ENCODE measurements at regions of chr1 and their contacts with region 1.

Region 1: DNA sequence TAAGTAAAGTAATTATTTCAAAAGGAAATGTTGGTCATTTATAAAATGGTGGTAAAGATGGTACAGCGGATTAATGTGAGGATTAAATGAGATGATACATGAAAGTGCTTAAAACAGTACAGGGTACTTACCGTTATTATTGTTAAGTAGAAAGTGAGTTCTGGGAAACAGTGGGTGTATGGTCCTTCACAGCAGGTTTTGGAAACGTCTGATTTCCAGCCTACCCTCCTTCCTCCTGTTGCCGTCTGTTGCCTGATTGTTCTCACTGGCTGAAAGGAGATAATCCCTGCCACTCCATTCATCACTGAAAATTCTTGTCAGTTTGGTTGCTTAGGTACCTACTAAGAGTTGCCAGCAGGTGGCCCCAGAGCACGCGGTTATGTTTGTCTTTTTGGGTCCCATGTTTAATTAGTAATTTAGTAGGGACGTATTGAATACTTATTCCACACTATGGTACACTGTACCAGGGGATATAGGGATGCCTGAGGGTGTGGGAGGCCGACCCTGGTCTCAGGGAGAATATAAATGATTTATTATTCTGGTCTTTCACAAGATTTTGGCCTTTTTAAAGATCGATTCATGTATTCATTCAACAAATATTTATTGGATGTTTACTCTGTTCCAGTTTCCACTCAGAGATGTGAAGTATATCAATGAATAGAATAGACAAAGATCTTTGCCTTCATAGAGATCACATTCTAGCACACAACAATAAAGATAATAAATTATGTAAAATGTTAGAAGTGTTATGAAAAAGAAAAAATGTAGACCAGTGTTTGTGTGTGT is 30.8 kb upstream of the RPTN start:
- DNase-seq: peak; percentile 67
- ATAC-seq: peak; percentile 72
- H3K4me3 ChIP-seq: peak overlapping the region; percentile 63 to 76
- H3K27ac ChIP-seq: peak overlapping the region; percentile 80
- H3K4me1 ChIP-seq: peaks cover 3% of the 10 kb centered on the region; the same call in 1 of the 2 replicates
- H3K27me3 ChIP-seq: no peaks in the 10 kb centered on the region
- CTCF ChIP-seq: peak; percentile 89

Region 2: GRCh38 chr1:152047730-152048402 is 142.0 kb before region 1 on chr1:
- CTCF ChIA-PET with region 1: interaction called, 14 read pairs
- POLR2A ChIA-PET with region 1: no interaction called
- in situ Hi-C with region 1: no loop called
- intact Hi-C with region 1: loop called (anchors 1 kb)
- DNase-seq: peak; percentile 96
- ATAC-seq: peak; percentile 97
- H3K4me3 ChIP-seq: peak overlapping the region; percentile 34 to 59
- H3K27ac ChIP-seq: peak overlapping the region; percentile 99
- H3K4me1 ChIP-seq: peaks cover 23% of the 10 kb centered on the region
- H3K27me3 ChIP-seq: no peaks in the 10 kb centered on the region
- CTCF ChIP-seq: peak; percentile 75

Region 3: GRCh38 chr1:152347116-152347728 is 157.4 kb after region 1 on chr1:
- CTCF ChIA-PET with region 1: interaction called, 3 read pairs
- POLR2A ChIA-PET with region 1: no interaction called
- in situ Hi-C with region 1: no loop called
- intact Hi-C with region 1: loop called (anchors 2 kb)
- DNase-seq: peak; percentile 68
- ATAC-seq: peak; percentile 87
- H3K4me3 ChIP-seq: no peak overlapping the region
- H3K27ac ChIP-seq: no peak overlapping the region
- H3K4me1 ChIP-seq: no peaks in the 10 kb centered on the region
- H3K27me3 ChIP-seq: 0 out of 2 replicates have a peak, but pooled peaks cover 2% of the 10 kb centered on the region
- CTCF ChIP-seq: peak; percentile 86; the same call in 1 of the 2 replicates

Region 4: DNA sequence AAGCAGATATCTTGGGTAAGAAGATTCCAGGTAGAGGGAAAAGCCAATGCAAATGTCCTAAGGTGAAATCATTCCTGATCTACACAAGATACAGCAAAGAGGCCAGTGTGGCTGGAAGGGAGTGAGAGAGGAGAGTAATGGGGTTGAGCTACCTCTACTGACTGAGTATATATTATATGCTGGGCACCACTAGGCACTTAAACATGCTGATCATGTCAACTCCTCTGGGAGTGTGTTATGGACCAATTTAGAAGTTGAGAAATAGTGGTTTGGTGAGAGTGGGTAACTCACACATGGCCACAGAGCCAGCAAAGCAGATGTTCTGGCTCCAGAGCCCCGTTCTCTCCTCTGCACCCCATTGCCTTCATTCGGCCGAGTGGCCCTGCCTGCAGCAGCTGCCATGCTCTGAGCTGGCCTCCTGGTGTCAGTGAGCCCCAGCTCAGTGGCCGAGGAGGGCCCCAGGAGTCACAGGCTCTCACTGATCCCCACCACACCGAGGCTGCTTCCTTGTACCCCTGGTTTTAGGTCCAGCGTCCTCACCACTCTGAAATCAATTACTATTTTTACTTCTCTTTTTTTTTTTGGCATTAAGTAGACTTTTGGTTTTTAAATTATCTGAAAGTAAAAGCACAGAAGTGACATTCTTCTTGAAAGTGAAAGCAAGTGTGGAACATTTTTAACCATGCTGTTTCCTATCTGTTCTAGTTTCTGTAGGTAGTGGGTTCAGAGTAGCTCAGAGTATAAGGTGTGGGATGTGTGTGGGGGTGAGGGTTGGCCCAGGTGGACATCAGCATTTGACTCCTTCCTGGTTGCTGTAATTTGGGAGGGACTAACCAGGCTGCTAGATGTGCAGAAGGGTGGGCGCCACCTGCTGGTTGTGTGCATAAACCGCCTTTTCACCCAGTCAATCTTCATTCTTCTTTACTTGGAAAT is 270.0 kb after region 1 on chr1:
- CTCF ChIA-PET with region 1: interaction called, 30 read pairs
- POLR2A ChIA-PET with region 1: no interaction called
- in situ Hi-C with region 1: no loop called
- intact Hi-C with region 1: loop called (anchors 1 kb)
- DNase-seq: peak; percentile 54
- ATAC-seq: peak; percentile 78
- H3K4me3 ChIP-seq: peak overlapping the region; percentile 12 to 29
- H3K27ac ChIP-seq: no peak overlapping the region
- H3K4me1 ChIP-seq: no peaks in the 10 kb centered on the region
- H3K27me3 ChIP-seq: no peaks in the 10 kb centered on the region
- CTCF ChIP-seq: peak; percentile 95

Measured in Panc1 (cell line).